Activated naive CD4-positive, alpha-beta T cell treated with anti-CD3 and anti-CD28 coated beads for 36 hours (primary cell): ENCODE measurements at regions of chr4 and their contacts with region 1.

Region 1: DNA sequence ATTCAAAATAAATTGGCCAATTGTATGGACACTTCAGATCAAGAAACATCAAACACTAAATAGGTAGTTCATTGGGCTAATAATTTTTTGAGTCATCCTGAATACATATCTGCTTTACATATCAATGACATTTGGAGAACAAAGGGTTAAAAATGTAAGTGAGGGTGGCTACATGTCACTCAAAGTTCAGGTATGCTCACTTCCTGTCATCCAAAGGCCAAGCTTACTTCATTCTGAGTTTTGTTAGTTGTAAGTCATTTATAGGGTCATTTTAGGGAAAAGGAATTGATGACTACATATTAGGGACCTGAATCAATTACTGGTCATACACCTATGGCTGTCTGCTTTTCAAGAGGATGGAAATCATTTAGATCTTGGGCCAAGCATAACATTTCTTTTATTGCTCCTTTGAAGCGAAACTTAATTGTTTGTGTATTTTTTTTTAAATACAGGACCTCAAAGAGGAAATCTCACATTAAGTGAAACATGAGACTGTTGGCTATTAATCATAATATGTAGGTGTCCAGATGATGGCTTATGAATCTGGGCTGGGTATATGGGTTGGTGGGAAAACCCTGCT is 119.2 kb upstream of the LEF1 start:
- DNase-seq: no peak
- H3K4me3 Mint-ChIP-seq: no peak overlapping the region
- H3K27ac Mint-ChIP-seq: no peak overlapping the region
- H3K4me1 Mint-ChIP-seq: peaks cover 20% of the 10 kb centered on the region
- H3K27me3 Mint-ChIP-seq: no peaks in the 10 kb centered on the region

Region 2: GRCh38 chr4:106892786-106893185 is 1395.1 kb before region 1 on chr4:
- CTCF ChIA-PET with region 1: no interaction called
- intact Hi-C with region 1: no loop called
- DNase-seq: no peak
- H3K4me3 Mint-ChIP-seq: no peak overlapping the region
- H3K27ac Mint-ChIP-seq: no peak overlapping the region
- H3K4me1 Mint-ChIP-seq: no peaks in the 10 kb centered on the region
- H3K27me3 Mint-ChIP-seq: no peaks in the 10 kb centered on the region

Region 3: DNA sequence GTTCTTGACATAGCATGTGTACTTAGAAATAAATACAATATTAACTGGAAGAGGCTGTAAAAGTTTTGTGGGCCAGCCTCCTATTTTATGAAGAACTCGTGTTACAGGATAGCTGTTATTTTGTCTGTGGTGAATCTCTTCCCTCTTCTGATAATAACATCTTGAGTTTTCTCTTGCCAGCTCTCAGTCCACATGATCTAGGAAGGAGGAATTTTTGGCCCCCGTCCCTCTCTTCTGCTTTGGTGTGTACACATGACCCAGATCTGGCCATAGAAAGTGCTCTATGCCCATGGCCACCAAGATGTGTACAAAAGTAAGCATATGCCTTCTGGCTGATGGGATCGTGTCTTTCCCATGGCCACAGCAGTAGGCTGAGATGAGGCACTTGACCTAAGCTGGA is 11.2 kb before region 1 on chr4:
- CTCF ChIA-PET with region 1: interaction called, 11 read pairs
- intact Hi-C with region 1: no loop called
- DNase-seq: no peak
- H3K4me3 Mint-ChIP-seq: no peak overlapping the region
- H3K27ac Mint-ChIP-seq: no peak overlapping the region
- H3K4me1 Mint-ChIP-seq: peaks cover 8% of the 10 kb centered on the region
- H3K27me3 Mint-ChIP-seq: no peaks in the 10 kb centered on the region